ENCODE measurements at regions of chr6 and their contacts with region 1.

Region 1: DNA sequence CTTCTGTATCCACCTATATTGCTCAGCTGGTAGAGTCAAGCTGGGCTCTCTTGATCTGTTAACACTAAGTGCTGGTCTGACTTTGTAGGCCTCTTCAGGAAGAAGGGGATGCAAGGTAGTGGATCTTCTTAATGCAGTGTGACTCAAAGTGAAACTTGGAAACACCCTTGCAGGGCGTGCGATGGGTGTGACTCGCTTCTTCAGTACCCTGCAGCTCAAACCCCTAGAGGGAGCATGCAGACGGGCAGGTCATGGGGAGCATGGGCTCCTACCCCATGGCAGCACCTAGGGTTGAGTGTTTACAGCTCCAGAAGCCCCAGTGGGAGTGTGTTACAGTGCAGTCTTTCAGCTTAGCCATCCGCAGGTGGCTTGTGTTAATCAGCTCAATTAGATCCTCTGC is 757 bp upstream of the SAMD3 start:
- DNase-seq: peak; percentile 82
- H3K4me3 Mint-ChIP-seq: no peak overlapping the region
- H3K27ac Mint-ChIP-seq: no peak overlapping the region
- H3K4me1 Mint-ChIP-seq: peaks cover 22% of the 10 kb centered on the region
- H3K27me3 Mint-ChIP-seq: no peaks in the 10 kb centered on the region

Region 2: GRCh38 chr6:130037207-130037811 is 186.2 kb before region 1 on chr6:
- CTCF ChIA-PET with region 1: interaction called, 3 read pairs
- intact Hi-C with region 1: loop called (anchors 2 kb)
- DNase-seq: no peak
- H3K4me3 Mint-ChIP-seq: no peak overlapping the region
- H3K27ac Mint-ChIP-seq: no peak overlapping the region
- H3K4me1 Mint-ChIP-seq: peaks cover 39% of the 10 kb centered on the region
- H3K27me3 Mint-ChIP-seq: no peaks in the 10 kb centered on the region